ENCODE measurements at regions of chr11 and their contacts with region 1.

Region 1: DNA sequence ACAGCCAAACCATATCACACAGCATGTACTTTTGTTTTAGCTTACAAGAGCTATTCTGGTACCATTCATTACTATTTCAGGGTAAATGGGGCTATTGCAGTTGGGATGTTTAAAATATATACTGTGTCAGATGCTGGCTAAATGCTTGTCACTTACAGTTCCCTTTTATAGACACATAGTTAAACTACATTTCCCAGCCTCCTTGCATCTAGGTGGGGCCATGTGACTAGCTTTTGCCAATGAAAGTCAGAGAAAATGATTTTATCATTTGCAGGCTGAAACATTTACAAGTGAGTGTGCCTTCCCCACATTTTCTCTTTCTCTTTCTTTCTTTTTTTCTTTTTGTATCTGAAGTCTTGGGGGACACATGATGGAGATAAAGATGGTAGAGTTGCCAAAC is 7.8 kb upstream of the IFTAP start:
- DNase-seq: no peak
- H3K4me3 ChIP-seq: no peak overlapping the region
- H3K27ac ChIP-seq: no peak overlapping the region
- H3K4me1 ChIP-seq: no peaks in the 10 kb centered on the region
- H3K27me3 ChIP-seq: no peaks in the 10 kb centered on the region; the same call in 1 of the 2 replicates

Region 2: DNA sequence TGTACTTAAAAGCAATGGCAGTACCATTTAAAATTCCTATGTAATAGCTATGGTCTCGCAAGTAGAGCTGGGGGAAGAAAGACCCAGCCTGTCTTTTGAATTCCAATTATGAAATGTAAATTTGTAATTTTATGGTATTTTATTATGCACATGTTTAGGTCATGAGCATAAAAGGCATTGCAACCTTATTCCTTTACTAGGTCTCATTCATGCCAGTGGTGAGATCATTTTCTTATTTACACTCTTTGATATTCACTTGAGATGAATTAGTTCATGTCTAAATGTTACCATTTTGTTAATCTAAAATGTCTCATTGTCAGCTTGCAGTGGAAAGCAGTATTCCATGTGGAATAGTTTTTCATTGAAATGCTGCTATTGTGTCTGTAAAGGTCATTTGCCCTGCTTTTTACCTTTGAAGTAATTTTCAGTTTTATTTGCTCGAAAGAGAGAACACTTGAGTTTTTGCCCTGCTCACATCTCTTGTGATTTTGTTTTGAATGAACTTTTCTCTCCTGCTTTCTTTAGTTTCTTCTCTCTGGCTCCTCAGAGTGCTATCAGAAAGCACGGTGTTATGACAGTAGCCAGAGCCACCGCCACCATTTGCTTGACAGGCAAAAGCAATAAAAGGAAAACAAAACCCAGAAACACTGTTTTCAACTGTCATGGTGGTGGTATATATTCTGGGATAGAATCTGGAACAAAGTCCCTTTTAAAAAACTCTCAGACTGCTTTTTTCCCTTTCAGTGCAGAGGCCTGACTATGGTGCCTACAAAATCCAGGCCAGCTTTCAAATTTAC is 48.7 kb after region 1 on chr11:
- in situ Hi-C with region 1: loop called (anchors 10 kb)
- DNase-seq: no peak
- H3K4me3 ChIP-seq: no peak overlapping the region
- H3K27ac ChIP-seq: no peak overlapping the region
- H3K4me1 ChIP-seq: no peaks in the 10 kb centered on the region
- H3K27me3 ChIP-seq: no peaks in the 10 kb centered on the region